ENCODE measurements at regions of chr1 and their contacts with region 1.

Region 1: DNA sequence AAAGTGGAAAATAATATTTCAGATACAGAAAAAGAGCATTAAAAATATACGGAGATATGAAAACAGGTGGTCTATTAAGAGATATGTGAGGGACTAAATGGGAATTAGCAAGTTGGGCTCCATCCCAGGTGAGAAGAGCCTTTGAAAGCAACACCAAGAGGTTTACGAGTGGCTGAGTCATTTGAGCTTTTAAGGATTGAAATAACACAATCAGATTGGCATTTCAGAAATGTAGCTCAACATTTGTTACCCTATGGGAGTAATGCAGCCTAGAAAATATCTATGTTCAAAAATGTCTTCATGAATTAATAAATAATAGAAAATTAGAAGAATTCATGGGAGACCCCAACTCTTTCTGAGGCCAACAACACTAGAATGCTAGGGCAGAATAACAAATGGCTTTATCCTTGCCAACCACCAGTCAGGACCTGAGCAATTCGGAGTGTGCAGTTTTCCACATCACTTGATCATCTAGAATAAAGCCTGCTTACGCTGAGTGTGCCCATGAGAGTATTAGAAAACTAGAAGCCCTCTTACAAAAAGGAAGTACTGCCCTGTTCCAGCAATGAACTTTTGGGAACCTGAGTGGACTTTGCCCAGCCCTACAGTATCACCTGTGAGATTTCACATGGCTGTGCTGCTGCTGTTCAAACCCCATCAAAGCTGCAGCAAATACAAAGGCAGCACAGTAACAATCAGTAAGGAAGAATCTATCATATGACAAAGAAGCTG is 538.0 kb upstream of the CAMK1G start:
- DNase-seq: no peak
- H3K4me3 ChIP-seq: no peak overlapping the region
- H3K27ac ChIP-seq: no peak overlapping the region
- H3K4me1 ChIP-seq: no peaks in the 10 kb centered on the region; a peak in 1 of 7 replicates
- H3K27me3 ChIP-seq: peaks cover 0 to 7% (median 1%) of the 10 kb centered on the region in 4 experiments; a peak in 2 of 7 replicates
- CTCF ChIP-seq: no peak
- EP300 ChIP-seq: no peak
- POLR2A ChIP-seq: no peak
- RAD21 ChIP-seq: no peak

Region 2: GRCh38 chr1:208988811-208989222 is 56.7 kb before region 1 on chr1:
- CTCF ChIA-PET with region 1: no interaction called
- POLR2A ChIA-PET with region 1: no interaction called
- DNase-seq: no peak
- H3K4me3 ChIP-seq: no peak overlapping the region
- H3K27ac ChIP-seq: no peak overlapping the region
- H3K4me1 ChIP-seq: no peaks in the 10 kb centered on the region
- H3K27me3 ChIP-seq: no peaks in the 10 kb centered on the region
- CTCF ChIP-seq: no peak
- EP300 ChIP-seq: no peak
- POLR2A ChIP-seq: no peak
- RAD21 ChIP-seq: no peak

Region 3: DNA sequence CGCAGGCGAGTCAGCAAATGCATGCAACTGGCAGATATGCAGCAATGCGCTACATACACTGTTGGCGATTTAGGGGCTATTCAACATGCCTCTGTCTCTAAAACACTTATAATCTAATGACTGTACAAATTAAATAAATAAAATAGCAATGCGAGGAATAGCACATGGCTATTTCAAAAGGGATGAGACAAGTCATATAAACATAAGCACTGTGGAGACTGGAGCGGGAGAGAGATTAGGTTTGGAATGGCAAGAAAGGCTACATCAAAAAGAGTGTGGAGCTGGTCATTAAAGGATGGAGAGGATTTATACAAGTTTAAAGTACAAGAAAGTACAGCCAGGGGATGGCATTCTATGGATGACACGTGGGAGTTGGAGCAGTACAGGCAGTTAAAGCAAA is 14.5 kb after region 1 on chr1:
- CTCF ChIA-PET with region 1: interaction called, 13 read pairs
- POLR2A ChIA-PET with region 1: no interaction called
- DNase-seq: no peak
- H3K4me3 ChIP-seq: no peak overlapping the region
- H3K27ac ChIP-seq: no peak overlapping the region
- H3K4me1 ChIP-seq: peaks cover 0 to 4% (median 2%) of the 10 kb centered on the region in 4 experiments; a peak in 3 of 7 replicates
- H3K27me3 ChIP-seq: no peaks in the 10 kb centered on the region
- CTCF ChIP-seq: no peak
- EP300 ChIP-seq: no peak
- POLR2A ChIP-seq: no peak
- RAD21 ChIP-seq: no peak

Region 4: DNA sequence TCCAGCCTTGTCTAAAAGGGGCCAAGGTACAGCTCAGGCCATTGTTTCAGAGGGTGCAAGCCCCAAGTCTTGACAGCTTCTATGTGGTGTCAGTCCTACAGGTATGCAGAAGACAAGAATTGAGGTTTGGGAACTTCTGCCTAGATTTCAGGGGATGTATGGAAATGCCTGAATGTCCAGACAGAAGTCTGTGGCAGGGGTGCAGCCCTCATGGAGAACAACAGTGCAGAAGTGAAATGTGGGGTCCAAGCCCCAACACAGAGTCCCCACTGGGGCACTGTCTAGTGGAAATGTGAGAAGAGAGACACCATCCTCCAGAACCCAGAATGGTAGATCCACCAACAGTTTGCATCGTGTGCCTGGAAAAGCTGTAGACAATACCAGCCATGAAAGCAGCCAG is 137.7 kb after region 1 on chr1:
- CTCF ChIA-PET with region 1: no interaction called
- POLR2A ChIA-PET with region 1: no interaction called
- DNase-seq: no peak
- H3K4me3 ChIP-seq: no peak overlapping the region
- H3K27ac ChIP-seq: no peak overlapping the region
- H3K4me1 ChIP-seq: no peaks in the 10 kb centered on the region
- H3K27me3 ChIP-seq: no peaks in the 10 kb centered on the region
- CTCF ChIP-seq: no peak
- EP300 ChIP-seq: no peak
- POLR2A ChIP-seq: no peak
- RAD21 ChIP-seq: no peak

Measured in H1 (cell line).